ENCODE measurements at regions of chr2 and their contacts with region 1.

Region 1: GRCh38 chr2:234483568-234484251 is 13.2 kb downstream of the ARL4C start:
- DNase-seq: peak; percentile 94
- ATAC-seq: peak; percentile 89
- H3K4me3 Mint-ChIP-seq: peak overlapping the region; percentile 51
- H3K27ac Mint-ChIP-seq: peak overlapping the region; percentile 87
- H3K4me1 Mint-ChIP-seq: peaks cover 82% of the 10 kb centered on the region
- H3K27me3 Mint-ChIP-seq: no peaks in the 10 kb centered on the region

Region 2: DNA sequence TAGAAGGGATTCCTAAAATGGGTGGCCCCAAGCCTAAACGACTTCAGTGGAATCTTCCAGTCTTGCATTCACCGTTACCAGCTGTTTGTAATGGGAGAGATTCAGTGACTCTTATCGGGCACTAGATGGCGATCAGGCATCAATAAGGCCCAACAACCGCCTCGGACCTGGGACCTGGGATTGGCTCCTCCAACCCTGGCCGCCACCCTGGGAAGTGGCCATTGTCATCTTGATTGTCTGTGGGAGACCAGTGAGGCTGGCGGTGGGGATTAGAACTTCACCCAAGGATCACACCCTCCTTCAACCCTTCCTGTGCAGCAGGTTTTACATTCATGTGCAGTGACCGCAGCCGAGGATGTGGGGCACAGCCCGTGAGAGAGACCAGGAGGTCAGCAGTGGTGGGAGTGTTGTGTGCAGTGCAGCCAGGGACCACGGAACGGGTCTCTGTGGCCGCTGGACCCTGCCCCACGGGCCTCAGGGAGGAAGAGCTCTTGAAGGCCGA is 347.9 kb before region 1 on chr2:
- CTCF ChIA-PET with region 1: interaction called, 11 read pairs
- POLR2A ChIA-PET with region 1: no interaction called
- DNase-seq: peak; percentile 72
- ATAC-seq: peak; percentile 84
- H3K4me3 Mint-ChIP-seq: no peak overlapping the region
- H3K27ac Mint-ChIP-seq: no peak overlapping the region
- H3K4me1 Mint-ChIP-seq: peaks cover 22% of the 10 kb centered on the region
- H3K27me3 Mint-ChIP-seq: peaks cover 16% of the 10 kb centered on the region

Region 3: GRCh38 chr2:234446404-234447076 is 37.2 kb before region 1 on chr2:
- CTCF ChIA-PET with region 1: interaction called, 7 read pairs
- POLR2A ChIA-PET with region 1: interaction called, 16 read pairs
- DNase-seq: peak; percentile 94
- ATAC-seq: peak; percentile 90
- H3K4me3 Mint-ChIP-seq: peak overlapping the region; percentile 66
- H3K27ac Mint-ChIP-seq: peak overlapping the region; percentile 99
- H3K4me1 Mint-ChIP-seq: peaks cover 86% of the 10 kb centered on the region
- H3K27me3 Mint-ChIP-seq: no peaks in the 10 kb centered on the region

Region 4: GRCh38 chr2:234451852-234452625 is 31.7 kb before region 1 on chr2:
- CTCF ChIA-PET with region 1: interaction called, 26 read pairs
- POLR2A ChIA-PET with region 1: interaction called, 49 read pairs
- DNase-seq: no peak
- ATAC-seq: peak; percentile 7
- H3K4me3 Mint-ChIP-seq: peak overlapping the region; percentile 85
- H3K27ac Mint-ChIP-seq: peak overlapping the region; percentile 92
- H3K4me1 Mint-ChIP-seq: peaks cover 86% of the 10 kb centered on the region
- H3K27me3 Mint-ChIP-seq: no peaks in the 10 kb centered on the region

Region 5: GRCh38 chr2:234463626-234464290 is 20.0 kb before region 1 on chr2:
- CTCF ChIA-PET with region 1: interaction called, 18 read pairs
- POLR2A ChIA-PET with region 1: interaction called, 7 read pairs
- DNase-seq: peak; percentile 76
- ATAC-seq: peak; percentile 85
- H3K4me3 Mint-ChIP-seq: peak overlapping the region; percentile 60
- H3K27ac Mint-ChIP-seq: peak overlapping the region; percentile 81
- H3K4me1 Mint-ChIP-seq: peaks cover 55% of the 10 kb centered on the region
- H3K27me3 Mint-ChIP-seq: no peaks in the 10 kb centered on the region